ENCODE measurements at regions of chr7 and their contacts with region 1.

Region 1: GRCh38 chr7:37201003-37201875 is 247.4 kb downstream of the ELMO1 start:
- DNase-seq: peak; percentile 64
- ATAC-seq: peak; percentile 83
- H3K4me3 ChIP-seq: no peak overlapping the region
- H3K27ac ChIP-seq: no peak overlapping the region
- H3K4me1 ChIP-seq: peaks cover 45% of the 10 kb centered on the region
- H3K27me3 ChIP-seq: no peaks in the 10 kb centered on the region
- CTCF ChIP-seq: peak; percentile 94
- EP300 ChIP-seq: no peak
- POLR2A ChIP-seq: no peak
- RAD21 ChIP-seq: peak; percentile 86

Region 2: DNA sequence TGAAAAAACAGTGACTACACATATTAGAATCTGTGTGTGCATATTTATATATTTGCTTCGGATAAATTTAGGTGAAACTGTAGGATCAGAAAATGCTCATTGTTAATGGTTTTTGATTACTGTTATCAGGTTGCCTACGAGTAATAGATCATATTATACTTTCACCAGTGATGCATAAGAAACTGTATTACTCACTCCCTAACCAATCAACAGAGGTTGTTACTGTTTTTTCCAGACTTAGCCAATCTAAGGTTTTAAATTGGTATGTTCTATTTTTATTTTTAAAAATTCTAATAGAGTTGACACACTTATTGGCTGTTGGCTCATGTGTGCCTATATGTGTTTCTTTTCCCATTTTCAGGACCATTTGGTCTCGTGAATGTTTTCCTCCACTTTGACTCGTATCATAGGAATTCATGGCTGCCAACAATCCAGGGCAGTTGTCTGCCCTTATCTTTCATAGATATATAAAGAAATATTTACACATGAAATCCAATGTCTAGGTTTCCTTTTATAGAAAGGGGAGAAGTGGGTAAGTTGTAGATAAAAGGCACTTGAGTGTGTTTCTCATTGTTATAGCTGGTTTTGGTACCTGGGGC is 752.4 kb before region 1 on chr7:
- CTCF ChIA-PET with region 1: no interaction called
- POLR2A ChIA-PET with region 1: no interaction called
- in situ Hi-C with region 1: no loop called
- intact Hi-C with region 1: no loop called
- DNase-seq: peak; percentile 30
- ATAC-seq: no peak
- H3K4me3 ChIP-seq: no peak overlapping the region
- H3K27ac ChIP-seq: no peak overlapping the region
- H3K4me1 ChIP-seq: no peaks in the 10 kb centered on the region
- H3K27me3 ChIP-seq: no peaks in the 10 kb centered on the region
- CTCF ChIP-seq: no peak
- EP300 ChIP-seq: no peak
- POLR2A ChIP-seq: no peak
- RAD21 ChIP-seq: no peak

Region 3: GRCh38 chr7:36473454-36474282 is 727.6 kb before region 1 on chr7:
- CTCF ChIA-PET with region 1: interaction called, 14 read pairs
- POLR2A ChIA-PET with region 1: no interaction called
- in situ Hi-C with region 1: no loop called
- intact Hi-C with region 1: loop called (anchors 1 kb)
- DNase-seq: peak; percentile 43
- ATAC-seq: peak; percentile 89
- H3K4me3 ChIP-seq: no peak overlapping the region
- H3K27ac ChIP-seq: no peak overlapping the region
- H3K4me1 ChIP-seq: no peaks in the 10 kb centered on the region; the same call in 1 of the 2 replicates
- H3K27me3 ChIP-seq: no peaks in the 10 kb centered on the region
- CTCF ChIP-seq: peak; percentile 80
- EP300 ChIP-seq: no peak
- POLR2A ChIP-seq: no peak
- RAD21 ChIP-seq: peak; percentile 44; the same call in 1 of the 2 replicates

Region 4: GRCh38 chr7:36670585-36671431 is 530.4 kb before region 1 on chr7:
- CTCF ChIA-PET with region 1: interaction called, 6 read pairs
- POLR2A ChIA-PET with region 1: no interaction called
- in situ Hi-C with region 1: loop called (anchors 25 kb)
- intact Hi-C with region 1: loop called (anchors 2 kb)
- DNase-seq: peak; percentile 42
- ATAC-seq: peak; percentile 88
- H3K4me3 ChIP-seq: no peak overlapping the region
- H3K27ac ChIP-seq: no peak overlapping the region
- H3K4me1 ChIP-seq: no peaks in the 10 kb centered on the region
- H3K27me3 ChIP-seq: no peaks in the 10 kb centered on the region
- CTCF ChIP-seq: peak; percentile 85
- EP300 ChIP-seq: no peak
- POLR2A ChIP-seq: no peak
- RAD21 ChIP-seq: peak; percentile 42

Region 5: DNA sequence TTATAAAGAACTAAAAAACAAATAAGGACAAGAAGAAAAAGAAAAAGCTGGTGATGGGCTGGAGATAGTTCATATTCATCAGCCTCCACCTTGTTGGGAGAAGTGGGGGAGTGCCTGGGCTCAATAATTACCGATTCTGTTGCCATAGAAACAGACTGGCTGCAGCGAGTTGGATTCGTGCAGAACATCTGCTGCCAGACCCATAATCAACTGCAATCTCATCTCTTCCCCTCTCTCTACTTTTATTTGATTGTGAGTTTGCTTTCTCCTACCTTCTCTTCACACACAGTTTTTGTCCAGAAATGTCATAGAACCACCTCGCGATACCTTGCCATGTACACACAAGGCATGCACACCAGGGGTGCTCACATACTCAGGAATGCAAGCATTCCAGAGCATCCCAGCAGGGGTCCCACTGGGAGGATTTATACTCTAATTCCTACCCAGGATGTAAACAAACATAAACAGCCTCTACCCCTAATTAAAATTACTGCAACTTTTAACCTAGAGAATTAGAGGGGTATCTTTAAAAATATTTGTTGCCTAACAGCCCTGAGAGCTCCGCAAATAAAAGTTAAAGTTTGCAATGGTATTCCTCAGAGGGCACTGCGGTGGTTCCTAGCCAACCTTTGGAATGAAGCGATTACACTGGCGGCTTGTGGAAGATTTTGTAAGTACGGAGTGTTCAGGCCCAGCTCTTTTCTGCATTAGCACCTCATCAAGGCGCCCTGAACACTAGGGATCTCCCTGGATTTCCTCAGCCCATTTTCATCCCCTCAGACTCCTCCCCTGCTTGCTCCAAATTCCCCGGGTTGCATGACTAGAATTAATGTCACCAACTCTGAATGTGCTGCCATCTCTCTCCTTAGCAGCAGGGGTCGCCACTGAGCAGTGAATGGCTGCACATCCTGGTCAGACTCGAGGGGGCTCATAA is 214.5 kb before region 1 on chr7:
- CTCF ChIA-PET with region 1: interaction called, 4 read pairs
- POLR2A ChIA-PET with region 1: no interaction called
- in situ Hi-C with region 1: no loop called
- intact Hi-C with region 1: loop called (anchors 2 kb)
- DNase-seq: peak; percentile 36
- ATAC-seq: peak; percentile 68
- H3K4me3 ChIP-seq: no peak overlapping the region
- H3K27ac ChIP-seq: no peak overlapping the region
- H3K4me1 ChIP-seq: peaks cover 43% of the 10 kb centered on the region
- H3K27me3 ChIP-seq: no peaks in the 10 kb centered on the region
- CTCF ChIP-seq: peak; percentile 89
- EP300 ChIP-seq: no peak
- POLR2A ChIP-seq: no peak
- RAD21 ChIP-seq: peak; percentile 68

Region 6: DNA sequence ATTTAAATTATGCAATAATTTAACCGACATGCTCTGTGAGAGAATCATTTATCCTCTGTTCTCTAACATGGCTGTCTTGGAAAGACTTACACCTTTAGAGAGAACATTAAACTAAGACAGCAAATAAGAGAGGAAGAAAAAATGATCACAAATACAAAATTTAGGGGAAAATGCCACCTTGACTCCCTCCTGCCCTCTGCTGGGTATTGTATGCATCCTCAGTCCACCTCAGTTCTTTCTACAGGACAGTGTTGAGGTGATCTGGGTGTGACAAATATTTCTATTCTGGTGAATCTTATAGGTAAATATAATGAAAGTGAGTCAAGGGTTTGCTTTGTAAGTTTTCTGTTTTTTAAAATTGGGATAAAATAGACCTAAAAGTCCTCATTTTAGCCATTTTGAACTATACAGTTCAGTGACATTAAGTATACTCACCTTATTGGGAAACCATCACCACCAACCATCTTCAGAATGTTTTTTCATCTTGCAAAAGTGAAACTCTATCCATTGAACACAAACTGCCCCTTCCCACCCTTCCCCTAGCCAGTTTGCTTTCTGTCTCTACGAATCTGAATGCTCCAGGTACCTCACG is 308.9 kb after region 1 on chr7:
- CTCF ChIA-PET with region 1: no interaction called
- POLR2A ChIA-PET with region 1: no interaction called
- in situ Hi-C with region 1: loop called (anchors 25 kb)
- intact Hi-C with region 1: no loop called
- DNase-seq: peak; percentile 4
- ATAC-seq: peak; percentile 59; the same call in 2 of the 3 replicates
- H3K4me3 ChIP-seq: no peak overlapping the region
- H3K27ac ChIP-seq: no peak overlapping the region
- H3K4me1 ChIP-seq: no peaks in the 10 kb centered on the region
- H3K27me3 ChIP-seq: no peaks in the 10 kb centered on the region; a peak in 1 of 5 replicates
- CTCF ChIP-seq: peak; percentile 57
- EP300 ChIP-seq: no peak
- POLR2A ChIP-seq: no peak
- RAD21 ChIP-seq: no peak

Region 7: DNA sequence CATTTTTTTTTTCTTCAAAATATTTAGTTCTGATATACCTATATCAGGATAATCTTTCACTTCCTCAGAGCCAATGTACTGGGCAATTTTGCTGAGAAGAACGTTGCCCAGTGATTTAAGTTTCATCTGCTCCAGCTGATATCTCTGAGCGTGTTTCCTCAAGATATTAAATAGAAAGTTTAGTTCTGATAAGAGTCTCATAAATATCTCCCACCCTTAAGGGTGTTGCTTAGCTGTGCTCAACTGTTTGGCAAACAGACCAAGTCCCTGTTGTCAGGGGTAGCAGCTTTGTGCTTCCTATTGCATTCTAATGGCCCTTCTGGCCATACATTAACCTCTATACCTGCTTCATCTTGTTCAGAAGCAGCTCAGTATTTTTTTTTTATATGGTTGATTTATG is 397.6 kb after region 1 on chr7:
- CTCF ChIA-PET with region 1: no interaction called
- POLR2A ChIA-PET with region 1: no interaction called
- in situ Hi-C with region 1: no loop called
- intact Hi-C with region 1: no loop called
- DNase-seq: no peak
- ATAC-seq: no peak
- H3K4me3 ChIP-seq: no peak overlapping the region
- H3K27ac ChIP-seq: no peak overlapping the region
- H3K4me1 ChIP-seq: no peaks in the 10 kb centered on the region
- H3K27me3 ChIP-seq: no peaks in the 10 kb centered on the region
- CTCF ChIP-seq: no peak
- EP300 ChIP-seq: no peak
- POLR2A ChIP-seq: no peak
- RAD21 ChIP-seq: no peak